Aorta (tissue), 5 donors: ENCODE measurements at regions of chr11 and their contacts with region 1.

Region 1: GRCh38 chr11:16785520-16786128 is 47.2 kb downstream of the C11orf58 start:
- DNase-seq: peak in 1 of 2 donors; percentile 73
- ATAC-seq: peak; percentile 84
- H3K4me3 ChIP-seq: no peak overlapping the region
- H3K27ac ChIP-seq: no peak overlapping the region
- H3K4me1 ChIP-seq: no peaks in the 10 kb centered on the region
- H3K27me3 ChIP-seq: no peaks in the 10 kb centered on the region

Region 2: DNA sequence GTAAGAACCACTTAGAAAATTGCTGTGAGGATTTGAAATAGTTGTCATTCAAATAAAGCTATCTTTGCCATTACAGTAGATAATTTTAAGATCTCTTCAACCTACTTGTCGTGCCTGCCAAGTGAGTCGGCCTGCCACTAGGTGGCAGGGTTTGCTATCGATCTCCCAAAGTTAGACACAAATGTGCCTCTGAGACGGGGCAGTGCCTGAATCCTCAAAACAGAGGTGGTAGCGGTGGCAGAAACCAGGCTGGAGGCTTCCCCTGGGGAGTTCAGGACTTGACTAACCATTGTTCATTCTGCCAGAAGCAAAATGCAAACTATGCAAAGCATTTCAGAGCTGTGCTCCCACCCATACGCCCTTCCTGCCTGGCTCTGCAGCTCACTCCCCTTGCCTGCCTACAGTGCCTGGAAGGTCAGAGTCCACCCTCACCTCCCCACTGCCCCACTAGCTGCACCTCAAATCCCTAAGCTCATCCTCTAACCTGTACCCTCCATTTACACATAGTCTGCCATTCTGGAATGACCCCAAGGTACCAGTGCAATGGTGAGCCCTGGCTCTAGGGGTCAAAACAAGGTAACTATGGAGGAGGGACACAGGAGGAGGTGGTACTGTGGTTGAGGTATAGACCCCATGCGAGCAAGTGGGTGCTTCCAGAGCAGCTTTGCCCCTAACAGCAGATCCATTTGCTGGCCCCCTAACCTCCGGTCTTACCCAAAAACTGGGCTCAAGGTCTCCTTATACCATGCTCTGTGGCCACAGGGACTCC is 34.9 kb after region 1 on chr11:
- intact Hi-C with region 1: loop called in 1 of 2 experiments (anchors 5 kb)
- DNase-seq: peak; percentile 87 to 91
- ATAC-seq: peak; percentile 79
- H3K4me3 ChIP-seq: no peak overlapping the region
- H3K27ac ChIP-seq: no peak overlapping the region
- H3K4me1 ChIP-seq: no peaks in the 10 kb centered on the region
- H3K27me3 ChIP-seq: no peaks in the 10 kb centered on the region

Region 3: DNA sequence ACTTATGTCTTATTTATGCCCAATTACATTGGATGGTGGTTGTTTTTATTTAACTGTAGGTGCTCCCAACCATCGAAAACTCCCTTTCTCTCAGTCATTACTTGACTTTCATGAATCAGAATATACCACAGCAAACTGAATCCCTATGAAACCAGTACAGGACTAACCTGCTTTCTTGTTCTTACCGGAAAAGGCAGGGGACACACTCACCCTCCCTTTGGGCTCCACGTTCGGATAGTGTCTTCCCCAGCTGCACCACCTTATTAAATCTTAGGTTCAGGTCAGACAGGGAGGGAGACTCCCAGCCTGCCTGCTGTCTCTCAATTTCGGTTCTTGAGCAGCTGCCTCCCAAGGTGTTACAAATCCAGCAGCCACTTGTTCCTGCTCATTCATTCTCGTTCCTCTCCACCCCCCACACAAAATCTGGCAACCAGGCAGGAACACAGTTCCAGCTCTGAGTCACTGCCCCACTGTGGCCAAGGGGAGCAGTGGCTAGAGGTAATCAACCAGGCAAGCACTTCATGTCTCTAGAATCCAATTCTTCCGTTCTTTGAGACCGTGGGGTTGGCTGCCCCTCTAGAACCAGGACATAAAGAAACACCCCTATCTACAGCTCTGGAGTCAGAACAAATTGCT is 95.6 kb after region 1 on chr11:
- intact Hi-C with region 1: loop called in 1 of 2 experiments (anchors 5 kb)
- DNase-seq: peak in 1 of 2 donors; percentile 50
- ATAC-seq: peak; percentile 59
- H3K4me3 ChIP-seq: no peak overlapping the region
- H3K27ac ChIP-seq: no peak overlapping the region
- H3K4me1 ChIP-seq: no peaks in the 10 kb centered on the region
- H3K27me3 ChIP-seq: no peaks in the 10 kb centered on the region

Region 4: DNA sequence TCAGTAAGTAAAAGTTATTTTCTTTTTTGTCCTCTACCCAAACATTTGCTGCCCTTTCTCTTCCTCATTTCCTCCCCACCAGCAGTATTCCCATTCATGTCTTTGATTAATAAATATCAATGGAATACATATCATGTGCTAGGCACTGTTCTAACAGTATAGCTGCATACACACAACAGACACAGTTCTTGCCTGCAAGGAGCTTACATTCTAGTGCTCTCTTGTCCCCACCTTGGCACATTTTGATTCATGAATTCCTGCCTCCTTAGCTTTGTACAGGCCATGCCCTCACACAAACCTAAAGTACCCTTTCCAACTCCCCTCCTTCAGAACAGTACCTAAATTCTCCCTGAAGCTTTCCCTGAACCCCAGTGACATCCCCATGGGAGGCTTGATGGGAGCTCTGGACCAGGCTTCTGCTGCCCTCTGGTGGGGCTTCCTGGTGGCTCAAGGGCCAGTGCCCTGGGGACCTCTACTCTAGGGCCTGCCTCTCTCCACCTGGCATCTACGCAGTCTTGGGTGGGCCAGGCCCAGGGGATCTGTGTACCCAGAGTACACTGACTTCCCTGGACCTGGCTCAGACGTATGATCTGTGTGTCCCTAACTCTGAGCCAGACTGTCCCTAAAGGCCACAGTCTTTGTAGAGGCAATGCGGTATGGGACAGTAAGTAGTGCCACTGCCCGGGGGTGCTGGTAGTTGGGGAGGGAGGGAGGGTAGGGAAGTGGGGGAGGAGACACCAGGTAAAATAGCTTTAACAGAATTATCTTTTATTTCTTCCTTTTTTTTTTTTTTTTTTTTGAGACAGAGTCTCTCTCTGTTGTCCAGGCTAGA is 277.8 kb after region 1 on chr11:
- intact Hi-C with region 1: loop called (anchors 5 kb)
- DNase-seq: peak in 1 of 2 donors; percentile 81
- ATAC-seq: peak; percentile 74
- H3K4me3 ChIP-seq: no peak overlapping the region
- H3K27ac ChIP-seq: no peak overlapping the region
- H3K4me1 ChIP-seq: no peaks in the 10 kb centered on the region
- H3K27me3 ChIP-seq: no peaks in the 10 kb centered on the region